ENCODE measurements at regions of chr6 and their contacts with region 1.

Region 1: GRCh38 chr6:6315660-6316059 is 4.8 kb downstream of the F13A1 start:
- DNase-seq: no peak
- ATAC-seq: peak; percentile 35
- H3K4me3 Mint-ChIP-seq: no peak overlapping the region
- H3K27ac Mint-ChIP-seq: no peak overlapping the region
- H3K4me1 Mint-ChIP-seq: peaks cover 19% of the 10 kb centered on the region
- H3K27me3 Mint-ChIP-seq: peaks cover 29% of the 10 kb centered on the region
- CTCF ChIP-seq: peak; percentile 63

Region 2: GRCh38 chr6:5361396-5361795 is 954.3 kb before region 1 on chr6:
- CTCF ChIA-PET with region 1: no interaction called
- POLR2A ChIA-PET with region 1: no interaction called
- intact Hi-C with region 1: no loop called
- DNase-seq: no peak
- ATAC-seq: no peak
- H3K4me3 Mint-ChIP-seq: no peak overlapping the region
- H3K27ac Mint-ChIP-seq: no peak overlapping the region
- H3K4me1 Mint-ChIP-seq: no peaks in the 10 kb centered on the region
- H3K27me3 Mint-ChIP-seq: no peaks in the 10 kb centered on the region
- CTCF ChIP-seq: no peak

Region 3: GRCh38 chr6:6057424-6058053 is 258.1 kb before region 1 on chr6:
- CTCF ChIA-PET with region 1: no interaction called
- POLR2A ChIA-PET with region 1: no interaction called
- intact Hi-C with region 1: loop called (anchors 1 kb)
- DNase-seq: no peak
- ATAC-seq: peak; percentile 66
- H3K4me3 Mint-ChIP-seq: no peak overlapping the region
- H3K27ac Mint-ChIP-seq: no peak overlapping the region
- H3K4me1 Mint-ChIP-seq: no peaks in the 10 kb centered on the region
- H3K27me3 Mint-ChIP-seq: peaks cover 37% of the 10 kb centered on the region
- CTCF ChIP-seq: peak; percentile 42

Region 4: DNA sequence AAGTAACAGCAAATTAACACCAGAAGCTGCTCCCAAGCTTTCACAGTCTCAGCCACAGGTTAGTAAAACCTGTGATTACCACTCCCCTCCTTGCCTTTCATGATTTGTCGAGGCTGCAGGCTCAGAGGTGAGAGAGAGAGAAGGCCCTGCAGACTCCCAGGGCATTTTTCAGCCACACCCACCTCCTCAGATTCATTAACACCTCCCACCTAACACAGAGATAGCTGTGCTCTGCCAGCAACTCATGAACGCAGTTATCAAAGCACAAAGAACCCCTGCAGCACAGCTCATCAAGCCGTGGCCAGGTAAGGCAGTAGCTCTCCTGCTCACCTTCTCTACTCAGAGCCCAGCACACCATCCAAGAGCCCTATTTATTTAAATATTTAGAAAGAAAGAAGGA is 22.3 kb before region 1 on chr6:
- CTCF ChIA-PET with region 1: no interaction called
- POLR2A ChIA-PET with region 1: no interaction called
- intact Hi-C with region 1: no loop called
- DNase-seq: no peak
- ATAC-seq: no peak
- H3K4me3 Mint-ChIP-seq: no peak overlapping the region
- H3K27ac Mint-ChIP-seq: no peak overlapping the region
- H3K4me1 Mint-ChIP-seq: no peaks in the 10 kb centered on the region
- H3K27me3 Mint-ChIP-seq: peaks cover 11% of the 10 kb centered on the region
- CTCF ChIP-seq: no peak

Region 5: DNA sequence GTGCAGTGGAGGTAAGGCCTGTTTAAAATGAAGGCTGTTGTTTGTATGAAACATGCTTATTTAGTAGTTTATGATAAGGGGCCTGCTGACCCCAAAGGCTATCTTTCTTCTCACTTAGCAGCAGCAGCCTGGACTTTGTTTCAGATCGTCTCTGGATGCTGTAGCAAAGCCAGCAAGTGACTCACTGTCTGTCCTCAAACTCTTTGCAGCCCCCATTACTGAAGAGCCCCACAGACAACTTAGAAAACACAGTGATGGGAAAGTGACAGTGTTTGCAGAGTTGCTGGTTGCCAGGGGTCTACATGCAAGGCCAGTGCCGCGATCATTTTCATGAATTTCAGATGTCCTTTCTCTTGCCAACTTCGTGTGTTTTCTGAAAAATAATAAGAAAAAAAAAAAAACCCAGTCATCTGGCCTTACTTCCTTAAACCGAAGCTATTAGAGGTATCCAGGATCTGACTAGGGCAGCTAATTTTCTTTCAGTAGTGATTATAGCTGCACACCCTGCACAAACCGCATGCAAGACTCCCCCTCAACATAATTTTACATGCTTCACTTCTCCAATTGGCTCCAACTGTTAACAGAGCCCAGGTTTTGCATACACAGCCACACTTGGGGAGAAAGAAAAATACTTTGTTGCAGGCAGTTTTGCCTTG is 16.4 kb after region 1 on chr6:
- CTCF ChIA-PET with region 1: no interaction called
- POLR2A ChIA-PET with region 1: interaction called, 9 read pairs
- intact Hi-C with region 1: loop called (anchors 2 kb)
- DNase-seq: no peak
- ATAC-seq: peak; percentile 72
- H3K4me3 Mint-ChIP-seq: peak overlapping the region; percentile 81
- H3K27ac Mint-ChIP-seq: peak overlapping the region; percentile 100
- H3K4me1 Mint-ChIP-seq: peaks cover 48% of the 10 kb centered on the region
- H3K27me3 Mint-ChIP-seq: no peaks in the 10 kb centered on the region
- CTCF ChIP-seq: no peak

Region 6: DNA sequence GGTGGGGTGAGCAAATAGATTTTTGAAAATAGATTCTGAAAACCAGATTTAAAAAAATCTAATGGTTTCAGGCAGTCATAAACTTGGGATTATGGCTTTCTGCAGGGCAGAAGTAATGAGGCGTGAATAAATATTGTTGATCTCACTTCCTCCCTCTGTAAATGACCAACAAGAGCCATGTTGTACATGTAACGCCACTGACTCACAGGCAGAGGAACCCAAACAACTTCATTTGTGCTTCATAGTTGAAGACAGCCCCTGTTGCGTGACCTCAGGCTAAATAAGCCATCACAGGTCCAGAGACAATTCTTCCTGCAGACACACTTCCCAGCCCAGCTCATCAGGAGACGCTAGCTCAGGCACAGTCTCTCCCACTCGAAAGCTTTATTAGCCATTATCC is 63.9 kb after region 1 on chr6:
- CTCF ChIA-PET with region 1: no interaction called
- POLR2A ChIA-PET with region 1: no interaction called
- intact Hi-C with region 1: no loop called
- DNase-seq: no peak
- ATAC-seq: no peak
- H3K4me3 Mint-ChIP-seq: no peak overlapping the region
- H3K27ac Mint-ChIP-seq: no peak overlapping the region
- H3K4me1 Mint-ChIP-seq: peaks cover 4% of the 10 kb centered on the region
- H3K27me3 Mint-ChIP-seq: no peaks in the 10 kb centered on the region
- CTCF ChIP-seq: no peak

Region 7: GRCh38 chr6:6407071-6407741 is 91.5 kb after region 1 on chr6:
- CTCF ChIA-PET with region 1: interaction called, 4 read pairs
- POLR2A ChIA-PET with region 1: no interaction called
- intact Hi-C with region 1: loop called (anchors 1 kb)
- DNase-seq: no peak
- ATAC-seq: peak; percentile 79
- H3K4me3 Mint-ChIP-seq: no peak overlapping the region
- H3K27ac Mint-ChIP-seq: no peak overlapping the region
- H3K4me1 Mint-ChIP-seq: peaks cover 13% of the 10 kb centered on the region
- H3K27me3 Mint-ChIP-seq: peaks cover 16% of the 10 kb centered on the region
- CTCF ChIP-seq: no peak

Measured in activated B cell treated with CpG ODN at 0.5 μM for 24 hours (primary cell).